ENCODE measurements at regions of chr19 and their contacts with region 1.

Region 1: DNA sequence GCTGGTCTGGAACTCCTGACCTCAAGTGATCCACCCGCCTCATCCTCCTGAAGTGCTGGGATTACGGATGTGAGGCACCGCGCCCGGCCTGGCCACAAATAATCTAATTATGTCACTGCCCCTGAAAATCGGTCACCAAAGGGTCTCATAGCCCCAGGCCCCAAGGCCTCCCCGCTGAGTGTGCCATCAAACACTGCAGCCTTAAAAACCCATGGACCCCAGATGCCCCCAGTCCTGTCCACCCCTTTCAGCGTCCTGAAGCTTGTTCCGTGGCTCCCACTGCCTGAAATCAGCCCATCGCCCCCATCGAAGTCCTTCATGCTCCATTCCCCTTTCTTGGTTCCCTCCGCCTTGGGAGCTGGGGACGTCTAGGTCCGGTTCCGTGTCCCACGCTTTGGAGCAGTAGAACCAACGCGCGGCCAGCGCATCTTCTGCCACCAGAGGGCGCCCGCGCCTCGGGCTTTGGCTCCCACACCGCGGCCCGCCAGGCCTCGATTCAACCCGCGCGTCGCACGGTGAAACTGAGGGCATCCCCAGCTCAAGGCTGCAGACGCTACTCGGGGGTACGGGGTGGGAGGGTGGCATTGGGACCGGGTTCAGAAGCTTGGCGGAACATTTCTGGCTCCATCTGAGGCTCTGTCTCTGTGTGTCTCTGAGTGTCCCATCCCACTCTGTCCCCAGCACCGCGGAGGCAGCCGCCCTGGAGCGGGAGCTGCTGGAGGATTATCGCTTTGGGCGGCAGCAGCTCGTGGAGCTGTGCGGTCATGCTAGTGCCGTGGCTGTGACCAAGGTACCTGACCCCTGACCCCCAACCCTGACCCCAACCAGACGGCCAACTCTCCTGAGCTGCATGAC is 3.5 kb downstream of the YJEFN3 start:
- DNase-seq: no peak
- H3K4me3 ChIP-seq: no peak overlapping the region
- CTCF ChIP-seq: peak; percentile 98

Region 2: DNA sequence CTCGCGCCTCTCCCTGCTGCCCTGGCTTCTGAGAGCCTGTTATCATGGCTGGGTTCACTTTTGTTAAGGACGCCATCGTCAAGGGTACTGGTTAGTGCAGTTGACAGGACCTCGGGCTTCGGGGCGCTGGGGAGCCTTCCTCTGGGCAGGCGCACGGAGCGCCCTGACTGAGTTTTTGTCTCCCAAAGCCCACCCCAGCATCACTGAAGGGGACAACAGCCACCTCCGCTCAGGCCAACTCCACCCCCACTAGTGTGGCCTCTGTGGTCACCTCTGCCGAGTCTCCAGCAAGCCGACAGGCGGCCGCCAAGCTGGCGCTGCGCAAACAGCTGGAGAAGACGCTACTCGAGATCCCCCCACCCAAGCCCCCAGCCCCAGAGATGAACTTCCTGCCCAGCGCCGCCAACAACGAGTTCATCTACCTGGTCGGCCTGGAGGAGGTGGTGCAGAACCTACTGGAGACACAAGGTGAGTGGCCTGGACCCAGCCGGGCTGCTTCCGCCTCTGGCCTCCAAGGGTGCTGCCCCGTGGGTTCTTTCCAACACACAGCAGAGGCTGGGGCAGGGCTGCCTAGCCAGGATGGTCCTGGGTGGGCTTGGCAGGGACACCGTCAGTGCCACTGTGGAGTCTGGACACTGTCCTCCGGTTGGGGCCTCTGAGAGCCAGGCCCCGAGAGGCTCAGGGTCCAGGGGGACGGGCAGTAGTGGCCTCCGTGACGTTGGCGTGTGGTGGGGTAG is 33.8 kb before region 1 on chr19:
- CTCF ChIA-PET with region 1: no interaction called
- POLR2A ChIA-PET with region 1: no interaction called
- DNase-seq: no peak
- H3K4me3 ChIP-seq: no peak overlapping the region
- CTCF ChIP-seq: no peak

Region 3: GRCh38 chr19:19554074-19555023 is 22.2 kb after region 1 on chr19:
- CTCF ChIA-PET with region 1: interaction called, 142 read pairs
- POLR2A ChIA-PET with region 1: no interaction called
- DNase-seq: no peak
- H3K4me3 ChIP-seq: no peak overlapping the region
- CTCF ChIP-seq: peak; percentile 73

Region 4: DNA sequence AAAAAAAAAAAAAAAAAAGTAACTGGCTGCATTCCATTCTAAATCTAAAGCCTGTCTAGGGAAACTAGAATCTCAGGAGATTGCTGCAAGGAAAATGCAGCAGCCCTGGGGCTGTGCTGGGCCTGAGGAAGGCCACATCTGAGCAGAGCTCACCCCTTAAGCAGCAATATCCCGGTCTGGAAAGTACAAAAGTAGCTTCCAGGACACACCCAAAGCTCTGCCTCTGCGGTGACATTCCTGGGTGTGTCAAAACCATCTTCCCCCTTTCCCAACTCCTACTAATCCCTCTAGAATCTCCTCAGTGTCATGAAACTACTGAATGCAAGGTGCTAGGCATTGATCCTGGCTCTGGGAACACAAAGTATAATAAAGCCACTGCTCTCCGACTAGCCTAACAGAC is 81.3 kb after region 1 on chr19:
- CTCF ChIA-PET with region 1: interaction called, 16 read pairs
- POLR2A ChIA-PET with region 1: no interaction called
- DNase-seq: no peak
- H3K4me3 ChIP-seq: no peak overlapping the region
- CTCF ChIP-seq: no peak

Region 5: GRCh38 chr19:19634516-19635312 is 102.5 kb after region 1 on chr19:
- CTCF ChIA-PET with region 1: interaction called, 37 read pairs
- POLR2A ChIA-PET with region 1: no interaction called
- DNase-seq: no peak
- H3K4me3 ChIP-seq: no peak overlapping the region
- CTCF ChIP-seq: no peak

Region 6: DNA sequence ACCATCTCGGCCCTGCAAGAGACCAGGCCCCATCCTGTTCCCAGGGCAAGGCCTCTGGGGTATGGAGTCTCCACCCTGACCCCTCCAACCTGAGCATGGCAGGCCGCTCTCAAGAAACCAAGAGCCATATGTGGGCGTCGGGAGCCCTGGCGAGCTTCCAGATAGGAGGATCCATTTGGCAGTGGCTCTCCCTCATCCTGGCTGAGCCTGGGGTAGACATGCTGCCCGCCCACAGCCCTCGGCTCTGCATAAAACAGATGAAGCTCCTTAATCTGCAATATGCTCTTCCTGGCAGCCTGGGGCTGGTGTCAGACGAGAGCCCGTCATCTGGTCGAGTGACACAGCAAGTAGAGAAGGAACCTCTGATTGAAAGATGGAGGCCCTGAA is 125.2 kb after region 1 on chr19:
- CTCF ChIA-PET with region 1: interaction called, 26 read pairs
- POLR2A ChIA-PET with region 1: no interaction called
- DNase-seq: no peak
- H3K4me3 ChIP-seq: no peak overlapping the region
- CTCF ChIP-seq: no peak

Region 7: DNA sequence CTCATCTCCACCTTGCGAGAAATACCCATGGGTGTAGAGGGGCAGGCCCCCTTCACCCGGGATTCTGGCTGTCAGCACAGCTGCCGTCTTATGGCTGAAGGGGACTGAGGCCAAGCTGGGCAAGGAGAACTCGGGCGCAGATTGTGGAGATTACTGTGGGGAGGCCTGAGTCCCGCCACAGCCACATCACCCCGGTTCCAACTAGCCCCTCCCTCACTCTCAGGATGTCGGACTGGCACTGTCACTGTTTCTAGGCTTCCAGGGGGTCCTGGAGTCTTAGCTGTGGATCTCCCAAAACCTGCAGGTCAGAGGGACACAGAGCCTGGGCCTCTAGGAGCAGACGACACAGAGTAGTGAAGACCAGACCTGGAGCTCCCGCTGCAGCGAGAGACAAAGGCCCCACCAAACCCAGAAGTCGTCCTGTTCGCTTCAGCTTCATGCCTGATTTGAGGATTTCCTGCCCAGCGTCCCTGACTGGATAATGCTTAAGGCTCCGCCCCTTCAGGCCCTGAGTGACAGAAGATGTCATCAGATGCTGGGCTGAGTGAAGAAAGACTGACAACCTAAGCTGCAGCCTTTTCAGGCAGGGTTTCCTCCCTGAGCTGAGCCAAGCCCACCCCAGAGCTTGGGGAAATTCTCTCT is 424.4 kb after region 1 on chr19:
- CTCF ChIA-PET with region 1: interaction called, 17 read pairs
- POLR2A ChIA-PET with region 1: no interaction called
- DNase-seq: no peak
- H3K4me3 ChIP-seq: no peak overlapping the region
- CTCF ChIP-seq: no peak